Dorsolateral prefrontal cortex (tissue), 120 donors: ENCODE measurements at regions of chr17 and their contacts with region 1.

Region 1: GRCh38 chr17:57440522-57441485 is 184.5 kb downstream of the MSI2 start:
- DNase-seq: peak; percentile 58 to 89 (median 76)
- H3K4me3 ChIP-seq: peak overlapping the region in 15 of 59 donors; percentile 3 to 36 (median 16)
- H3K27ac ChIP-seq: peak overlapping the region; percentile 34 to 95 (median 84)
- H3K27me3 ChIP-seq: no peaks in the 10 kb centered on the region
- CTCF ChIP-seq: peak in 54 of 56 donors; percentile 37 to 79 (median 66)

Region 2: GRCh38 chr17:57243171-57243948 is 197.4 kb before region 1 on chr17:
- intact Hi-C with region 1: loop called in 1 of 2 experiments (anchors 2 kb)
- DNase-seq: peak in 6 of 10 donors; percentile 23 to 64 (median 48)
- H3K4me3 ChIP-seq: no peak overlapping the region
- H3K27ac ChIP-seq: no peak overlapping the region
- H3K27me3 ChIP-seq: no peaks in the 10 kb centered on the region
- CTCF ChIP-seq: peak; percentile 60 to 99 (median 94)

Region 3: GRCh38 chr17:57422574-57423164 is 18.1 kb before region 1 on chr17:
- intact Hi-C with region 1: no loop called
- DNase-seq: no peak
- H3K4me3 ChIP-seq: no peak overlapping the region
- H3K27ac ChIP-seq: peak overlapping the region in 4 of 59 donors; percentile 1 to 49 (median 32)
- H3K27me3 ChIP-seq: no peaks in the 10 kb centered on the region
- CTCF ChIP-seq: no peak

Region 4: DNA sequence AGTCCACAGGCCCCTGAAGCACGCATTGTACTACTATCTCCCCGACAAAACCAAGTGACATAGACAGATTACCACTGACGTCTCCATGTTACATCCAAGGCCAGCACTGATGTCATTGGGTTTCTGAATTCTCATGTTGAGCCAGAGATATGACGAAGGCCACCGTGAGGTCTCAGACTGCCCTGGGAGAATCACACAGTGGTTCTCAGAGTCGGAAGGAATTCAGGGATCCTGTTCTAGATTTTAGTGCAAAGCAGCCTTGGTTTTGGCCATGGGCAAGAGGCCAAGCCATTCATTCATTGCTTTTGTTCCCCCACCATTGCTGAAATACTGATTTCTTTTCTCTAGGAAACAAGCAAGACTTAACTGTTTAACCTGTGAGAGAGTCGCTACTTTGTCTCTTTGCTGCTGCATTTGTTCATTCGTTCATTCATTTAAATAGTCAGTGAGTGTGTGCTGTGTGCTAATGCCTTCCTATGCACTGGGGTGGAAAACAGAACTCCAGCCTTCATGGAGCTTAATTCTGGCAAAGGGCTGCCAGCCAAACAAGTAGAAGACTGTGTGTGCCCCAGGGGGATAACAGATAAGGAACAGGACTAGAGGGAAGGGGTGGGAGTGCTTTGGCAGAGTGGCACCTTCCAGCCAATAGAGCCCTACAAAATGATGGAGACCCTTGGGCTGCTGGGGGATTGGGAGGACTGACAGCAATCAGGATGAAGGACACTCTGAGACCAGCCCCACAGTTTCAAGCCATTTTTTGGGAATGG is 37.9 kb after region 1 on chr17:
- intact Hi-C with region 1: loop called in 1 of 2 experiments (anchors 5 kb)
- DNase-seq: no peak
- H3K4me3 ChIP-seq: no peak overlapping the region
- H3K27ac ChIP-seq: peak overlapping the region in 40 of 59 donors; percentile 1 to 80 (median 58)
- H3K27me3 ChIP-seq: no peaks in the 10 kb centered on the region
- CTCF ChIP-seq: no peak

Region 5: GRCh38 chr17:57597531-57598453 is 157.0 kb after region 1 on chr17:
- intact Hi-C with region 1: loop called in 1 of 2 experiments (anchors 5 kb)
- DNase-seq: peak in 9 of 10 donors; percentile 47 to 86 (median 76)
- H3K4me3 ChIP-seq: no peak overlapping the region
- H3K27ac ChIP-seq: peak overlapping the region in 44 of 59 donors; percentile 0 to 82 (median 48)
- H3K27me3 ChIP-seq: no peaks in the 10 kb centered on the region
- CTCF ChIP-seq: peak; percentile 74 to 97 (median 89)

Region 6: DNA sequence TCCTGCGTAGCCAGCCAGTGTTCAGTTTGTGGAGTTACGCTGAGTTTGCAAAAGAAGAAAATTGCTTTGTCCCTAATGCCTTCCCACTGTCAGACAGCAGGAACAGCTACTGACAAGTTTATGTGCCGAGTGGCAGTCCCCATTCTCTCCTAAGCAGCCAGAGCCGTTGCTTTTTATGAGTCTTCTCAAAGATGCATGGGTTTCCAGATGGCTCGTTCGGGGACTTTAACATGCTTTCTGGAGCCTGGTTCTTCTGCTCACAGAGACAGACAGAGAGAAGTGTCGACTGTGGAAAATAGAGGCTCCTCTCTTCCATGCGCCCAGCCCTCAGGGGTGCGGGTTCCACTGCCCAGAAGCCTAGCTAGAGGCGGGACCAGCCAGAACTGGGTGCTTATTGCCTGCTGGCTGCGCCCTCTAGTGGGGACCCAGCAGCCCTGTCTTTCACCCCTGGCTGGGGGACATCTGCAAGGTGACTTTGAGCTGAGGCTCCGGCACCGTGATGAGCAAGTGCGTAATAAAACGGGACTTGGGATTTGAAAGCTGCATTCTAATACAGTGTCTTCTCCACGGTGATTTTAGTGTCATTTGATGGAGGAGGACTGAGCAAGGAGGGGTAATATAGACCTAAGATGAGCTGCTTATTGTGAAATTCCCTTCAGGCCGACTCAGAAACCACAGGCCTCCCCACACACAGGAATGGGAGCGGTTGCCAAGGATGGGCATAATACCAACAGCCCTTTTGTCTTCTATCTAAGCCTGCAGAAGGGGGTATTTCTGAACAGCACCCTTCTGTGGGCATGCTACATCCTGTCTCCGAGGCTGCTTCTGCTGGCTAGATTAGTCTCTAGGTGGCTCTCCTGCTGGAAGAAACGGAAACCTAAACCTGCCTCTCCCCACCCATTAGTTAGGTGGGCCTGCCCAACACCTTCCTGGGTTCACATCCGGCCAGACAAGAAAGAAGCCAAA is 231.1 kb after region 1 on chr17:
- intact Hi-C with region 1: loop called in 1 of 2 experiments (anchors 10 kb)
- DNase-seq: peak; percentile 68 to 88 (median 81)
- H3K4me3 ChIP-seq: peak overlapping the region in 22 of 59 donors; percentile 0 to 42 (median 22)
- H3K27ac ChIP-seq: peak overlapping the region in 54 of 59 donors; percentile 20 to 83 (median 65)
- H3K27me3 ChIP-seq: no peaks in the 10 kb centered on the region
- CTCF ChIP-seq: peak; percentile 81 to 99 (median 95)